ENCODE measurements at regions of chr3 and their contacts with region 1.

Region 1: GRCh38 chr3:25412269-25412668 is 15.8 kb upstream of the RARB start:
- DNase-seq: peak in 1 of 2 experiments; percentile 44
- H3K4me3 ChIP-seq: no peak overlapping the region
- H3K4me3 Mint-ChIP-seq: no peak overlapping the region
- H3K27ac Mint-ChIP-seq: peak overlapping the region; percentile 79
- H3K4me1 ChIP-seq: peaks cover 37% of the 10 kb centered on the region
- H3K4me1 Mint-ChIP-seq: peaks cover 33% of the 10 kb centered on the region
- H3K27me3 ChIP-seq: no peaks in the 10 kb centered on the region
- H3K27me3 Mint-ChIP-seq: no peaks in the 10 kb centered on the region
- CTCF ChIP-seq: no peak

Region 2: DNA sequence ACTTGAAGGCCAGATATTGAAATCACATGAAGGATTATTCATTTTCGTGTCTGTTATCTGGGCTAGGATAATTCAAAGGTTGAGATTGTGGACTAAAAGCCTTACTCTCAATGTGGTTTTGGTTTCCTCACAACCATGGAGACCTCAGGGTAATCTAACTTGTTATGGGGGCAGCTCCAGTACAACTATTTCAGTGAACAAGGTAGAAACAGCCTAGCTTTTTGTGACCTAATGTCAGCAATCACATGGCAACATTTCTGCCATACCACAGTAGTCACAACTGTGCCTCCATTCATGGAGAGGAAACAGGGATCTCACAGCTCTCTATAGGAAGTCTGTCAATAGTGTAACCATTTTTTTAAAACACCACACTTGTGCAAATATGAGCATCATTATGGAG is 46.6 kb before region 1 on chr3:
- CTCF ChIA-PET with region 1: no interaction called
- POLR2A ChIA-PET with region 1: no interaction called
- intact Hi-C with region 1: loop called (anchors 1 kb)
- DNase-seq: no peak
- H3K4me3 ChIP-seq: no peak overlapping the region
- H3K4me3 Mint-ChIP-seq: no peak overlapping the region
- H3K27ac Mint-ChIP-seq: no peak overlapping the region
- H3K4me1 ChIP-seq: peaks cover 10% of the 10 kb centered on the region
- H3K4me1 Mint-ChIP-seq: peaks cover 6% of the 10 kb centered on the region
- H3K27me3 ChIP-seq: no peaks in the 10 kb centered on the region
- H3K27me3 Mint-ChIP-seq: no peaks in the 10 kb centered on the region
- CTCF ChIP-seq: no peak

Region 3: DNA sequence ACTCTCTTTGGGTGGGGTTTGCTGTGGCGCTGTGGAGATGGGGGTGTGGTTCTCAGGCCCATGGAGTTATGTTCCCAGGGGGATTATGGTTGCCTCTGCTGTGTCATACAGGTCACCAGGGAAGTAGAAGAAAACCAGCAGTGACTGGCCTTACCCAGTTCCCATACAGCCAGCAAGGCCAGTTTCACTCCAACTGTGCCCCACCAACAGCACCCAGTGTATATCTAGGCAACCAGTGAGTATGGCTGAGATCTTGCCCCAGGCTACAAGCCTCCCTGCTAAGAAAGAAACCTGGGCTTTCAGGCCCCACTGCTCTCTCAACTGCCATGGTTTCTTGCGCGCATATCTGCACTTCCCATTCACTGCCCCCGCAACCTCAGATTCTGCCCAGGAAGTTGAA is 15.6 kb before region 1 on chr3:
- CTCF ChIA-PET with region 1: no interaction called
- POLR2A ChIA-PET with region 1: no interaction called
- intact Hi-C with region 1: loop called (anchors 1 kb)
- DNase-seq: no peak
- H3K4me3 ChIP-seq: no peak overlapping the region
- H3K4me3 Mint-ChIP-seq: peak overlapping the region; percentile 63
- H3K27ac Mint-ChIP-seq: peak overlapping the region; percentile 91
- H3K4me1 ChIP-seq: peaks cover 21% of the 10 kb centered on the region
- H3K4me1 Mint-ChIP-seq: peaks cover 14% of the 10 kb centered on the region
- H3K27me3 ChIP-seq: no peaks in the 10 kb centered on the region
- H3K27me3 Mint-ChIP-seq: no peaks in the 10 kb centered on the region
- CTCF ChIP-seq: no peak

Region 4: DNA sequence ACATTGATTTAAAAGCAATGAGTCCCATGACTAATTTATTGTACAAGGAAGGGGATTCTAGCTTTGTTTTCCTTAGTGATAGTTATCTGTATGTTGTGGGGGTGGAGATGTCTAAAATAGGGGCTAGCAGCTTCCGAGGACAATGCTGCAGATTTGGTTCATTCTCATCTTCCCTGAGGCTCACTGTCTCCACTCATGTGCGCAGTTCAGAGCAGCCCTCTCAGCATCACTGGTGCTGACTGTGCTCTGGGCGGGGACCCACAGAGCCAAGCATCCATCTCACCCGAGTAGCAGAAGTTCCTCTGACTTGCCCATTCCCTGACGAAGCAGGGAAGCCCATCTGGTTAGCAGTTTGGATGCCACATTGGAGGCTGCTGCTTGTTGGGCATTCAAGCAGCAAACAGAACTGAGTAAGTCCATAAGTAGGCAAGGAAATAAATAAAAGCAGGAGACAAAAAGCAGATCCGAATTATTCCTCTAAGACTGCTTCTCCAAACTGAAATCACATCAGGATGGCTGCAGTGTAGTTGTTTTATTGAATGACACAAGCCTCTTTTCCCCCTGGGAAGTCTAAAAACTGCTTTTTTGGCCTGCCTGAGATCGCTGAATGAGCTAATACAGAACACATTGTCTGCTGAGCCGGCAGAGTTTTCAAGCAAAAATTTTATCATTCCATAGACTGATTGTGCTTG is 43.3 kb after region 1 on chr3:
- CTCF ChIA-PET with region 1: no interaction called
- POLR2A ChIA-PET with region 1: no interaction called
- intact Hi-C with region 1: loop called (anchors 1 kb)
- DNase-seq: no peak
- H3K4me3 ChIP-seq: no peak overlapping the region
- H3K4me3 Mint-ChIP-seq: peak overlapping the region; percentile 69
- H3K27ac Mint-ChIP-seq: peak overlapping the region; percentile 94
- H3K4me1 ChIP-seq: peaks cover 28% of the 10 kb centered on the region
- H3K4me1 Mint-ChIP-seq: peaks cover 43% of the 10 kb centered on the region
- H3K27me3 ChIP-seq: no peaks in the 10 kb centered on the region
- H3K27me3 Mint-ChIP-seq: no peaks in the 10 kb centered on the region
- CTCF ChIP-seq: no peak